GM10248 (cell line): ENCODE measurements at regions of chr9 and their contacts with region 1.

Region 1: GRCh38 chr9:111050819-111051218 is 12.5 kb upstream of the LPAR1 start:
- DNase-seq: no peak
- CTCF ChIP-seq: no peak

Region 2: GRCh38 chr9:111038306-111039243 is 12.2 kb before region 1 on chr9 and contains the start of gene LPAR1:
- CTCF ChIA-PET with region 1: interaction called, 15 read pairs
- POLR2A ChIA-PET with region 1: no interaction called
- DNase-seq: no peak
- CTCF ChIP-seq: no peak